ENCODE measurements at regions of chr1 and their contacts with region 1.

Region 1: GRCh38 chr1:109090196-109091077 is at the start of gene TMEM167B:
- DNase-seq: peak; percentile 95
- ATAC-seq: peak; percentile 88
- H3K4me3 Mint-ChIP-seq: peak within 1 kb of the TSS; percentile 85
- H3K27ac Mint-ChIP-seq: peak within 1 kb of the TSS; percentile 84
- H3K4me1 Mint-ChIP-seq: peaks cover 30% of the 10 kb centered on the region
- H3K27me3 Mint-ChIP-seq: no peaks in the 10 kb centered on the region
- total RNA-seq, gene TMEM167B: 26.8 to 28.4 TPM

Region 2: GRCh38 chr1:107979926-107980325 is 1110.5 kb before region 1 on chr1:
- CTCF ChIA-PET with region 1: no interaction called
- POLR2A ChIA-PET with region 1: no interaction called
- intact Hi-C with region 1: no loop called
- DNase-seq: no peak
- ATAC-seq: no peak
- H3K4me3 Mint-ChIP-seq: no peak overlapping the region
- H3K27ac Mint-ChIP-seq: no peak overlapping the region
- H3K4me1 Mint-ChIP-seq: peaks cover 13% of the 10 kb centered on the region
- H3K27me3 Mint-ChIP-seq: peaks cover 1% of the 10 kb centered on the region

Region 3: GRCh38 chr1:108699375-108700332 is 390.8 kb before region 1 on chr1:
- CTCF ChIA-PET with region 1: no interaction called
- POLR2A ChIA-PET with region 1: no interaction called
- intact Hi-C with region 1: no loop called
- DNase-seq: no peak
- ATAC-seq: no peak
- H3K4me3 Mint-ChIP-seq: peak overlapping the region; percentile 60
- H3K27ac Mint-ChIP-seq: peak overlapping the region; percentile 83
- H3K4me1 Mint-ChIP-seq: peaks cover 71% of the 10 kb centered on the region
- H3K27me3 Mint-ChIP-seq: no peaks in the 10 kb centered on the region

Region 4: DNA sequence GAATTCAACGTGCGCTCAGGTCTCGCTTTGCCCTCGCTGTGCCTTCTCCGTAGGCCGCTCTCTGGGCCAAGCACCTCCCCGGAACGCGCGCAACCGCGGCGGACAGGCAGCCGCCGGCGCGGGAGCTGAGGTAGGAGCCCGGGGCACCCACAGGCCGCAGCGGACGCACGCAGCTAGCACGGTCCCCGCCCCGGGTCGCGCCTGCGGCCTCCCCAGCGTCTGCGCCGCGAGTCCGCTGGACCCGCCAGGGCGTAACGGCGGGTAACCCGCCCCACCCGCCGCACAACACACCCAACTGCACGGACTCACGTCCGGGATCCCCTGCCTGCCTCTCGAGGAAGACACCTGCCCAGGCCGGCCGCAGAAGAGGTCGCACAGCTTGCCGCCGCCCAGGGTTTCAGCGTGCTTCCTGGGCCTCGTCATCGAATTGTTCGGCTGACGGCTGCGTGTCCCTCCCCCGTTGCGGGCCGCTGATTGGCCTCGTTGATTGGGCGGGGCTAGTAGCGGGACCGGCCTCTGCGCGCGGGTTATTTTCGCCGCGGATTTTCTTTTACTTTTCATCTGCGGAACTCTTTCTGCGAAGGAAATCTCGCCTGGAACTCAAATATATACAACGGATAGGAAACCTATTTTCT is 127.3 kb before region 1 on chr1 and contains the start of gene CLCC1:
- CTCF ChIA-PET with region 1: interaction called, 3 read pairs
- POLR2A ChIA-PET with region 1: no interaction called
- intact Hi-C with region 1: loop called (anchors 1 kb)
- DNase-seq: peak; percentile 96
- ATAC-seq: peak; percentile 97
- H3K4me3 Mint-ChIP-seq: peak within 1 kb of the TSS; percentile 81
- H3K27ac Mint-ChIP-seq: peak within 1 kb of the TSS; percentile 91
- H3K4me1 Mint-ChIP-seq: peaks cover 26% of the 10 kb centered on the region
- H3K27me3 Mint-ChIP-seq: no peaks in the 10 kb centered on the region
- total RNA-seq, gene CLCC1: 15.7 to 17.1 TPM

Region 5: DNA sequence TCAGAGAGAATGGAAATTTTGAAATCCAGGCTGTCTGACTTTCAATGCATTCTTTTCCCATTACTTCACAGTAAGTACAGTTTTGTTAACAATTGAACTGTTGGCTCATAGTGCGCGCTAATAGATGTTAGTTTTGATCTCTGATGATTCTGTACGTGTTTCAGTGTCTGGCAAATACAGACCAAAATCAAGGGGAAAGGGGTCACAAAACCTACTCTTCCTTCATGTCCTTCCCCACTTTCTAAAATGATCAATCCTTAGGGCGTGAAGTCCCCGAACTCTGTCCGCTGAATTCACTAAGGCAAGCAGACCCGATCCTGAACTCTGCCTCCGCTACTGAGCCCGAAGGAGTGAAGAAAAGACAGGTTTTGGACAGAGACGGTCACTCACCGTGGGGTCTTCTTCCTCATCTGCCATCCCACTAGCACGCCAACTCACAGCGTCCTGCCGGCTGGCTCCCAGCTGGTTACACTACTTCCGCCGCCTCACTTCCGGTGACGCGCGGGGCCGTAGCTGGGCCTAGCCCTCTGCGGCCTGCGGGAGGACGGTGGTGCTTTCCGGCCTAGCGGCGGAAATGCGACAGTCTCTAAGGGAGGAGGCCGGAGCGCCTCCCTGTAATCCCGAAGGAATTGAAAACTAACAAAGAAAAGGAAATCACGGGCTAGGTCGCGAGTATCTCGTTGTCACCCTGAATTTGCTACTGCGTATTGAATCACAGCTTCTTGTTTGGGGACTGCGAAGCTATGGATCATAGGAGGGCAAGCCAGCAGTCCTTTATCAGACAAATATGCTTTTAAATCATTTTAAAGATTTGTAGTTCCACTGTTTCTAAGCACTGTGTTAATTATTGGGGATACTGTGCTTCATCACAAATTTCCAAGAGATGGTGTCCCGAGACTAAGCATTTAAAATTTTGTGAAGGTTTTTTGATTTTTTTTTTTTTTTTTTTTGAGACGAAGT is 14.6 kb before region 1 on chr1 and contains the start of gene TAF13:
- CTCF ChIA-PET with region 1: interaction called, 10 read pairs
- POLR2A ChIA-PET with region 1: interaction called, 10 read pairs
- intact Hi-C with region 1: loop called (anchors 1 kb)
- DNase-seq: peak; percentile 93
- ATAC-seq: peak; percentile 99
- H3K4me3 Mint-ChIP-seq: peak within 1 kb of the TSS; percentile 95
- H3K27ac Mint-ChIP-seq: peak within 1 kb of the TSS; percentile 94
- H3K4me1 Mint-ChIP-seq: peaks cover 10% of the 10 kb centered on the region
- H3K27me3 Mint-ChIP-seq: no peaks in the 10 kb centered on the region
- total RNA-seq, gene TAF13: 12.1 to 20.1 TPM

Region 6: DNA sequence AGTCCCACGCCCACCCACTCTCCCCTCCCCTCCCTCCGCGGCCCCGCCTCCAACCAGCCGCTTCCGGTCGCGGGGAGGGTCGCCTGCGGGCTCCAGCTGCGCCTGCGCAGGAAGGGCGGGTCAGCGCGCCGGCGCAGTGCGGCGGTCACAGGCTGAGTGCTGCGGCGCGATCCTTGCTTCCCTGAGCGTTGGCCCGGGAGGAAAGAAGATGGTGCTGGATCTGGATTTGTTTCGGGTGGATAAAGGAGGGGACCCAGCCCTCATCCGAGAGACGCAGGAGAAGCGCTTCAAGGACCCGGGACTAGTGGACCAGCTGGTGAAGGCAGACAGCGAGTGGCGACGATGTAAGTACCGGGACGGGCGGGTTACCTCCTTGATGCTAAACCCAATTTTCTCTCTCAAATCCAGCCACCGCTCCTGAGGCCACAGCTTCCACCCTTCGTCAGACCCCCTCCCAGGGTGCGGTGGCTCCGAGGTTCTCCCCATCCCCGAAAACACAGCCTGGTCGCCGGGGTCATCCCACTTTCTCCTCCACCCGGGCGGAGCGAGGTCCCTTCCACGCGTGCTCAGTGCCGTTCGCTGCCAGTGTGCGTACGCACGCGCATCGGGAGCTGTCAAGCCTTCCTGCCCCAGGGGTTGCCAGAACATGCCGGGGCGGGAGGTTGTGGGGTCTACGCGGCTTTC is 123.5 kb after region 1 on chr1 and contains the start of gene SARS1:
- CTCF ChIA-PET with region 1: interaction called, 3 read pairs
- POLR2A ChIA-PET with region 1: interaction called, 4 read pairs
- intact Hi-C with region 1: loop called in 1 of 2 experiments (anchors 1 kb)
- DNase-seq: peak; percentile 93
- ATAC-seq: peak; percentile 85
- H3K4me3 Mint-ChIP-seq: peak within 1 kb of the TSS; percentile 97
- H3K27ac Mint-ChIP-seq: peak within 1 kb of the TSS; percentile 95
- H3K4me1 Mint-ChIP-seq: peaks cover 32% of the 10 kb centered on the region
- H3K27me3 Mint-ChIP-seq: peaks cover 1% of the 10 kb centered on the region
- total RNA-seq, gene SARS1: 224 to 240 TPM

Region 7: DNA sequence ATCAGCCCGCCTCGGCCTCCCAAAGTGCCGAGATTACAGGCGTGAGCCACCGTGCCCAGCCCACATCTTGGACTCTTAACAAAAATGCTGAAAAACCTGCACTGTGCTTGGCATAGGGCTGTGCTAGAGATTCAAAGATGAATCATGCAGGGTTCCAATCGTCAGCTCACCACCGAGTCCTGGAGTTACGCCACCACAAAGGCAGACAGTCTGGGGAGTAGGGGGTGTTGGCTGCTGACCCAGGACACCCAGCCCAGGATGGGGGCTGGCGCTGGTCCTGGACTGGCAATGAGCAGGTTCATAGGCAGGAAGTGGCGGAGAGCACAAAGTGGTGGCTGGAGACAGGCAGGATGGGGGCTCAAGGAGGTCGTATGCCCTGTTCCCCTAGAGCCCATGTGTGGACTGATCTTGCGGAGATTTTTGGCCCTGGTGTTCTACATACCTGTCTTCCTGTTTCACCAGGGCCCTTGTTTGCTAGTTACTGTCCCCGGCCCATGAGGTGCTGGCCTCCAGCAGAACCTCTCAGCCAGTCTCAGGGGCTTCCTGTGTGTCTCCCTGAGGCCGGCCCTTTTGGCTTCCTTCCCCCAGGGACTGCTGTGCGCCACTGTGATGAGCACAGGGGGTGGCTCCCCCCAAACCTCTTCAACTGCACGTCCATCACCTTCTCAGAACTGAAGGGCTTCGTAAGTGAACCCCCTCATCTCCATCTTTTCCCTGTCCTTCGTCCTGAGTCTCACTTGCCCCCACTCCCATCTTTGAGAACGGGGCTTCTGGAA is 176.7 kb after region 1 on chr1:
- CTCF ChIA-PET with region 1: no interaction called
- POLR2A ChIA-PET with region 1: no interaction called
- intact Hi-C with region 1: no loop called
- DNase-seq: no peak
- ATAC-seq: no peak
- H3K4me3 Mint-ChIP-seq: no peak overlapping the region
- H3K27ac Mint-ChIP-seq: no peak overlapping the region
- H3K4me1 Mint-ChIP-seq: no peaks in the 10 kb centered on the region
- H3K27me3 Mint-ChIP-seq: no peaks in the 10 kb centered on the region

Measured in activated CD4-positive, alpha-beta T cell treated with anti-CD3 and anti-CD28 coated beads for 36 hours (primary cell).